ENCODE measurements at regions of chrX and their contacts with region 1.

Region 1: DNA sequence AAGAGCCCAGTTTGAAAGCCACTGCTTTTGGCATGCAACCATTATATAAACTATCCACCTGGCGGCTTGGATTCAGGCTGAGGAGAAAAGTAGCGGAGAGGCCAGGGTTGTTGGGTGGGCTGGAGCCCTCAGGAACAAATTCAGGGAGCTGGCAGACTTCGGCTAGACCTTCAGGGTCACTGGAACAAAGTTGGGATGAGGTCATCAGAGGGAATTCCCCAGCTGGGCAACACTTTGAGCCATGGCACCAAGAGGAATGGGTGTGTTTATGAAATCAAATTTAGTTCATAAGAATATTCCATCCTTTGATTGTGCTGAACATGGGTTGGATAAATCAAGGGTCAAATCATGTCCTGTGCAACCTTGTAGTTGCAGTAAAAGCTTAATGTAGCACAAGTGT is 22.0 kb downstream of the MTMR1 start:
- DNase-seq: no peak
- ATAC-seq: no peak
- H3K4me3 ChIP-seq: no peak overlapping the region
- H3K27ac ChIP-seq: no peak overlapping the region
- H3K4me1 ChIP-seq: peaks cover 0 to 12% of the 10 kb centered on the region in 2 donors
- H3K27me3 ChIP-seq: no peaks in the 10 kb centered on the region
- CTCF ChIP-seq: no peak
- POLR2A ChIP-seq: no peak

Region 2: GRCh38 chrX:150683536-150684146 is 31.5 kb before region 1 on chrX:
- in situ Hi-C with region 1: no loop called
- intact Hi-C with region 1: loop called (anchors 1 kb)
- DNase-seq: no peak
- ATAC-seq: peak in 1 of 2 donors; percentile 51
- H3K4me3 ChIP-seq: no peak overlapping the region
- H3K27ac ChIP-seq: no peak overlapping the region
- H3K4me1 ChIP-seq: no peaks in the 10 kb centered on the region
- H3K27me3 ChIP-seq: no peaks in the 10 kb centered on the region
- CTCF ChIP-seq: peak in 4 of 5 experiments; percentile 35 to 55 (median 40)
- POLR2A ChIP-seq: no peak

Region 3: GRCh38 chrX:150813922-150814321 is 98.7 kb after region 1 on chrX:
- in situ Hi-C with region 1: no loop called
- intact Hi-C with region 1: no loop called
- DNase-seq: no peak
- ATAC-seq: no peak
- H3K4me3 ChIP-seq: no peak overlapping the region
- H3K27ac ChIP-seq: no peak overlapping the region
- H3K4me1 ChIP-seq: no peaks in the 10 kb centered on the region
- H3K27me3 ChIP-seq: no peaks in the 10 kb centered on the region
- CTCF ChIP-seq: no peak
- POLR2A ChIP-seq: no peak

Region 4: DNA sequence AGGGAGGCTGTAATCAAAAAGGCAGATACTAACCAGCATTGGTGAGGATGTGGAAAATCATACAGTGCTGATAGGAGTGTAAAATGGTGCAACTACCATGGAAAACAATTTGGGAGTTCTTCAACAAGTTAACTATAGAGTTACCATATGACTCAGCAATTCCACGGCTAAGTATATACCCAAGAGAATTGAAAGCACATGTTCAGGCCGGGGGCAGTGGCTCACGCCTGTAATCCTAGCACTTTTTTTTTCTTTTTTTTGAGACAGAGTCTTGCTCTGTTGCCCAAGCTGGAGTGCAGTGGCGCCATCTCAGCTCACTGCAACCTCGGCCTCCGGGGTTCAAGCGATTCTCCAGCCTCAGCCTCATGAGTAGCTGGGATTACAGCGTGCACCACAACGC is 198.3 kb after region 1 on chrX:
- in situ Hi-C with region 1: no loop called
- intact Hi-C with region 1: no loop called
- DNase-seq: no peak
- ATAC-seq: no peak
- H3K4me3 ChIP-seq: no peak overlapping the region
- H3K27ac ChIP-seq: no peak overlapping the region
- H3K4me1 ChIP-seq: no peaks in the 10 kb centered on the region
- H3K27me3 ChIP-seq: no peaks in the 10 kb centered on the region
- CTCF ChIP-seq: no peak
- POLR2A ChIP-seq: no peak